ENCODE measurements at regions of chr1 and their contacts with region 1.

Region 1: GRCh38 chr1:101288491-101288944 is 51.7 kb downstream of the S1PR1 start:
- DNase-seq: peak; percentile 71
- ATAC-seq: peak; percentile 96
- H3K4me3 ChIP-seq: no peak overlapping the region
- H3K27ac ChIP-seq: no peak overlapping the region
- H3K4me1 ChIP-seq: no peaks in the 10 kb centered on the region; the same call in 1 of the 2 replicates
- H3K27me3 ChIP-seq: no peaks in the 10 kb centered on the region; the same call in 1 of the 2 replicates
- CTCF ChIP-seq: peak; percentile 79

Region 2: GRCh38 chr1:100921109-100921706 is 367.3 kb before region 1 on chr1:
- CTCF ChIA-PET with region 1: interaction called, 3 read pairs
- POLR2A ChIA-PET with region 1: no interaction called
- in situ Hi-C with region 1: no loop called
- intact Hi-C with region 1: loop called (anchors 2 kb)
- DNase-seq: peak; percentile 5
- ATAC-seq: no peak
- H3K4me3 ChIP-seq: no peak overlapping the region
- H3K27ac ChIP-seq: no peak overlapping the region
- H3K4me1 ChIP-seq: no peaks in the 10 kb centered on the region
- H3K27me3 ChIP-seq: no peaks in the 10 kb centered on the region
- CTCF ChIP-seq: peak; percentile 49; the same call in 1 of the 2 replicates

Region 3: GRCh38 chr1:101025657-101026504 is 262.6 kb before region 1 on chr1 and contains the start of gene DPH5:
- CTCF ChIA-PET with region 1: no interaction called
- POLR2A ChIA-PET with region 1: no interaction called
- in situ Hi-C with region 1: no loop called
- intact Hi-C with region 1: loop called (anchors 10 kb)
- DNase-seq: peak; percentile 57
- ATAC-seq: peak; percentile 98
- H3K4me3 ChIP-seq: peak within 1 kb of the TSS; percentile 74 to 91
- H3K27ac ChIP-seq: peak within 1 kb of the TSS; percentile 97
- H3K4me1 ChIP-seq: peaks cover 3% of the 10 kb centered on the region; the same call in 1 of the 2 replicates
- H3K27me3 ChIP-seq: no peaks in the 10 kb centered on the region
- CTCF ChIP-seq: no peak
- total RNA-seq, gene DPH5: 22.6 TPM

Region 4: GRCh38 chr1:101071470-101071891 is 217.0 kb before region 1 on chr1:
- CTCF ChIA-PET with region 1: no interaction called
- POLR2A ChIA-PET with region 1: no interaction called
- in situ Hi-C with region 1: no loop called
- intact Hi-C with region 1: no loop called
- DNase-seq: no peak
- ATAC-seq: no peak
- H3K4me3 ChIP-seq: no peak overlapping the region
- H3K27ac ChIP-seq: no peak overlapping the region
- H3K4me1 ChIP-seq: no peaks in the 10 kb centered on the region
- H3K27me3 ChIP-seq: no peaks in the 10 kb centered on the region
- CTCF ChIP-seq: no peak

Region 5: GRCh38 chr1:101136739-101137138 is 151.8 kb before region 1 on chr1:
- CTCF ChIA-PET with region 1: no interaction called
- POLR2A ChIA-PET with region 1: no interaction called
- in situ Hi-C with region 1: no loop called
- intact Hi-C with region 1: loop called (anchors 5 kb)
- DNase-seq: no peak
- ATAC-seq: no peak
- H3K4me3 ChIP-seq: no peak overlapping the region
- H3K27ac ChIP-seq: no peak overlapping the region
- H3K4me1 ChIP-seq: no peaks in the 10 kb centered on the region
- H3K27me3 ChIP-seq: no peaks in the 10 kb centered on the region
- CTCF ChIP-seq: no peak